ENCODE measurements at regions of chr4 and their contacts with region 1.

Region 1: GRCh38 chr4:101527188-101527587 is 179.9 kb upstream of the PPP3CA start:
- DNase-seq: no peak
- ATAC-seq: no peak
- H3K4me3 ChIP-seq: no peak overlapping the region
- H3K27ac ChIP-seq: no peak overlapping the region
- H3K4me1 ChIP-seq: no peaks in the 10 kb centered on the region
- H3K27me3 ChIP-seq: no peaks in the 10 kb centered on the region
- CTCF ChIP-seq: no peak
- POLR2A ChIP-seq: no peak
- RAD21 ChIP-seq: no peak

Region 2: DNA sequence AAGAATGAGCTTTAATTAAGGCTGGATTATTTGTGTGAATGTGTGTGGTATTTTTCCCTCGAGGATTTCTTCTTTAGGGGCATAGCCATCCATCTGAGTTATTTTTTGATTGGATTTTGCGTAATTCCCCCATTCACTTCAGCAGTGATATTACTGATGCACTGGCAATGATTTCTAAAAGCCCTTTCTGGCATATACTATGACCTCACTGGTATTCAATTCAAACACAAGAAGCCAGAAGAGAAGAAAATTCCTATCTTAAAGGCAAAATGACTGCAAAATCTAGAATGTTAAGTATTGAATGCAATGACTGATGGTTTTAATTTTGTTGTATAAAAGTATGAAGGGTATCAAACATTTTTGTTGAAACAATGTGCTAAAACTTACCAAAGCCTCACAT is 1265.8 kb before region 1 on chr4:
- CTCF ChIA-PET with region 1: no interaction called
- POLR2A ChIA-PET with region 1: no interaction called
- dilution Hi-C with region 1: no loop called
- in situ Hi-C with region 1: no loop called
- intact Hi-C with region 1: loop called (anchors 5 kb)
- DNase-seq: peak; percentile 16
- ATAC-seq: peak; percentile 64
- H3K4me3 ChIP-seq: no peak overlapping the region
- H3K27ac ChIP-seq: no peak overlapping the region
- H3K4me1 ChIP-seq: no peaks in the 10 kb centered on the region
- H3K27me3 ChIP-seq: no peaks in the 10 kb centered on the region
- CTCF ChIP-seq: no peak
- POLR2A ChIP-seq: no peak
- RAD21 ChIP-seq: no peak

Region 3: DNA sequence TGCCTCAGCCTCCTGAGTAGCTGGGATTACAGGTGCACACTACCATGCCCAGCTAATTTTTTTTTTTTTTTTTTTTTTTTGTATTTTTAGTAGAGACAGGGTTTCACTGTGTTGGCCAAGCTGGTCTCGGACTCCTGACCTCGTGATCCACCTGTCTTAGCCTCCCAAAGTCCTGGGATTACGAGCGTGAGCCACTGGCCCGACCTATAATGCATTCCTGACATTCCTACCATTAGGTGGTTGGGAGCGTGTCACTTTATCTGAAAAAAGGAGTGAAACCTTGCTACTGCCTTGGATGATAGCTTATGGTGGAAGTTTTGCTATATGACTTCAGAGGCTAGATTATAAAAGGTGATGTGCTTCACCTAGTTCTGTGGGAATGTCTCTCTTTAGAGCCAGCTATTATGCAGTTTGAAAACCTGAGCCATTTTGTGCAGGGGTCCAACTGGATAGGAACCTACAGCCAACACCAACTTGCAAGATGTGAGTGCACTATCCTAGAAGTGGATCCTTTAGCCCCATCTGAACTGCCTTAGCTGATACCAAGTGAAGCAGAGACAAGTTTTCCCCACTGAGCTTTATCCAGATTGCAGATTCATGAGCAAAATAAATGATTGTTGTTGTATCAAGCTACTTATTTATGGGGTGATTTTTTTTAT is 979.5 kb before region 1 on chr4:
- CTCF ChIA-PET with region 1: no interaction called
- POLR2A ChIA-PET with region 1: no interaction called
- dilution Hi-C with region 1: no loop called
- in situ Hi-C with region 1: no loop called
- intact Hi-C with region 1: no loop called
- DNase-seq: no peak
- ATAC-seq: no peak
- H3K4me3 ChIP-seq: no peak overlapping the region
- H3K27ac ChIP-seq: no peak overlapping the region
- H3K4me1 ChIP-seq: no peaks in the 10 kb centered on the region
- H3K27me3 ChIP-seq: no peaks in the 10 kb centered on the region
- CTCF ChIP-seq: no peak
- POLR2A ChIP-seq: no peak
- RAD21 ChIP-seq: no peak

Region 4: GRCh38 chr4:101846550-101846949 is 319.4 kb after region 1 on chr4:
- CTCF ChIA-PET with region 1: no interaction called
- POLR2A ChIA-PET with region 1: no interaction called
- dilution Hi-C with region 1: no loop called
- in situ Hi-C with region 1: no loop called
- intact Hi-C with region 1: no loop called
- DNase-seq: no peak
- ATAC-seq: no peak
- H3K4me3 ChIP-seq: no peak overlapping the region
- H3K27ac ChIP-seq: no peak overlapping the region
- H3K4me1 ChIP-seq: no peaks in the 10 kb centered on the region
- H3K27me3 ChIP-seq: no peaks in the 10 kb centered on the region
- CTCF ChIP-seq: no peak
- POLR2A ChIP-seq: no peak
- RAD21 ChIP-seq: no peak

Measured in IMR-90 (cell line).